ENCODE measurements at regions of chr9 and their contacts with region 1.

Region 1: GRCh38 chr9:93962561-93963440 is 7.6 kb upstream of the BARX1 start:
- DNase-seq: peak; percentile 28 to 95 (median 76)

Region 2: DNA sequence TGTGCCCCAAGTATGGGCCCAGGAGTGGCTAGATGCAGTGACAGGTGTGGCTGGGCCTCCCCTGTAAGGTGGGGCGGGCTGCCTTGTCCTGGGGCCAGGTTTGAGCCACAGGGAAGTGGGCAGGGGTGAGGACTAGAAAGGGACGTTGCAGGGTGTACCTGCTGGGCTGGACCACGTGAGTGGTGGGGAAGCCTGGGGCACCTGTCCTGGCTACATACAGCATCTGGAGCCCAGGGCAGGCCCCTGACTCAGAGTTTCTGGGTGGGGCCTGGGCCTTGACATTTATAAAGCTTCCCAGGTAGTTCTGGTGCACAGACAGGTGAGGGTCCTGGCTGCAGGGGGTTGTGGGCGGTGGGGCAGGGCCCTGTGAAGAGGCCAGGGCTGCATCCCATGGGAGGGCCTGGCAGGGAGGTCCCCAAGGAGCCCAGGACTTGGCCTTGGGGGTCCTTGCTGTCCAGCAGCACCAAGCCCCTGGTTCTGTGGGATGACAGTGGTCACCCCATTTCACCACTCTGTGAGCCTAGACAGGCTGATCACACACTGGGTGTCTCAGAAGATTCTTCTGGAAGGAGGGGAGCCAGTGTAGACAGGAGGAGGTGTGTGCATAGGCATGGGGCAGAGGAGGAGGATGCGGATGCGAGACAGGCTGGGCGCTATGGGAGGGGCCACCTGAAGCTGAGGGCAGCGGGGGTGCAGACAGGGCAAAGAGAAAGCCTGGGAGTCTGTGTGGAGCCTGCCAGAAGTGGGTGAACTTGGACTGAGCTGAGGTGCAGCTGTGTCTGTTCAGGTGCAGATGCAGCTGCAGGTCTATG is 292.4 kb before region 1 on chr9:
- intact Hi-C with region 1: no loop called
- DNase-seq: peak in 5 of 10 donors; percentile 6 to 70 (median 55)

Region 3: DNA sequence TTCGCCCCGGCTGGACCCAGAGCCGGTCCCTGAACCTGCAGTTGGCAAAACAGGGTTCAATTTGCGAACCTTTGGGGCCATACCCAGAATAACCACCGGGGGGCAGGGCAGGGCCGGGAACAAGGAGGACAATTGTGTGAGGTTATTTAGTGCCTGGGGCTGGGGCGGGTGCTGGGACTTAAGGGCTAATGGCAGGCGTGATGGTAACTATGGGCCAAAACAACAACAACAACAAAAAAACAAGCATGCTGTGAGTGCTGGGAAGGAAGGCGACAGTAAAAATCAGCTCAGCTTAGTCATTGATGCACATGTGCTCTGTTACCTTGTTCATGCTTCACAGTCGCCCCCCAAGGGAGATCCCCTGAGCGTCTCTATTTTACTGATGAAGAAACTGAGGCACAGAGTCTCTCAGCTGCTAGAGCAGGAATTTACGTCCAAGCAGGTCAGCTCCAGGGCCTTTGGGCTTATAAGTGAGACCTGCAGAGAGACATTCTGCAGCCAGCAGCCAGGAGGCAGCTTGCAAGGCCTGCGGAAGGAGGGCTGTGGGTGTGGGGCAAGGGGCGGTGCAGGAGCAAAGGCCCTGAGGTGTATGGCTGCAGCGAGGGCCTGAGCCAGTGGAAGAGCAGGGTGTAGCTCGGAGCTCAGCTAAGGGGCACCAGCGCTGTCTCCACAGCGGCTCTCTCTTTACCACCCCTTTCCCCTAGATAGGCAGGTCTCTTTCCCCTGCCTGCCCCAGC is 280.4 kb before region 1 on chr9:
- intact Hi-C with region 1: loop called (anchors 1 kb)
- DNase-seq: peak in 9 of 10 donors; percentile 47 to 94 (median 75)

Measured in posterior cingulate gyrus (tissue), 11 donors.